Ovary (tissue), 10 donors: ENCODE measurements at regions of chr6 and their contacts with region 1.

Region 1: DNA sequence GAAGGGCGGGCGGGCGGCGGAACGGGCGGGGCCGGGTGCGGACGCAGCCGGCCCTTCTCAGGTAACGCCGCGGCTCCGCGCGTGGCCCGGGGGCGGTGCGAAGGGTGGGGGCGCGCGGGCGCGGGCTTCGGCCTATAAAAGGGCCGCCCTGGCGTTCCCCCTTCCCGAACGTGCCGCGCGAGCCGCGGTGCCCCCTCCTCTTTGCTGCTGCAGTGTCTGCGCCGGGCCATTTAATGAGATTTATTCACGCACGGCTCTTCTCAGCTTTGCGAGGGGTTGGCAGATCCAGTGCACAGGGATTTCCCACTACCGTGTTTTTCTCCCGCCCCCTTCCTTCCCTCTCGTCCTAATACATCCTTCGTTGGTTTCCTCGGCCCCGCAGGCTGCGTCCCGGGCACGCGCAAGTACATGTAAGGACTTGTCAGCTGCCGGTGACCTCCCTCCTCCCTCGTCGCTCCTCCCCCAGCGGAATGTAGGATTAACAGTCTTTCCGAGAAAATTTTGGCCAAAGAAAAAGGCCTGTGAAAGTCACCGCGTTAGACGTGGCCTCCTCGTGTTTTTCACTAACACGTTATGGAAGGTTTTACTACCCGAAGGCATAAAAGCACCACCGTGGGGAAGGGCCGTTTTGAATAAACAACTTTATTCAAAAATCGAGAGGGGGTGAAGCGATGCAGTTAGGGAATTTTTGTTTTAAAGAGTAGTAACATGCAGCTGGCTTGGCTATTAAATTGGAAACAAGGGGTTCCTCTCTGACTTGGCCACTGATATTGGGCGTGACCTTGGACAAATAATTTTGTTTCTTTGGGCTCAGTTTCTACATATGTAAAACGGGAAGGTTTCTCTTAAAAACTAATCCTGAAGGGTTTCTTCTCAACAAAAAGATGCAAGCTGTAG is 966 bp upstream of the REV3L start:
- DNase-seq: peak; percentile 87 to 94 (median 94)
- H3K4me3 ChIP-seq: peak overlapping the region; percentile 97
- H3K27ac ChIP-seq: peak overlapping the region; percentile 96 to 99
- H3K4me1 ChIP-seq: peaks cover 4% of the 10 kb centered on the region
- H3K27me3 ChIP-seq: no peaks in the 10 kb centered on the region
- CTCF ChIP-seq: peak in 1 of 3 donors; percentile 11
- EP300 ChIP-seq: peak; percentile 15
- POLR2A ChIP-seq: peak; percentile 78

Region 2: GRCh38 chr6:109867970-109868358 is 1616.0 kb before region 1 on chr6:
- intact Hi-C with region 1: no loop called
- DNase-seq: peak in 3 of 5 donors; percentile 38 to 46 (median 41)
- H3K4me3 ChIP-seq: no peak overlapping the region
- H3K27ac ChIP-seq: peak overlapping the region in 1 of 2 donors; percentile 81
- H3K4me1 ChIP-seq: peaks cover 17% of the 10 kb centered on the region
- H3K27me3 ChIP-seq: no peaks in the 10 kb centered on the region
- CTCF ChIP-seq: no peak
- EP300 ChIP-seq: no peak
- POLR2A ChIP-seq: no peak

Region 3: DNA sequence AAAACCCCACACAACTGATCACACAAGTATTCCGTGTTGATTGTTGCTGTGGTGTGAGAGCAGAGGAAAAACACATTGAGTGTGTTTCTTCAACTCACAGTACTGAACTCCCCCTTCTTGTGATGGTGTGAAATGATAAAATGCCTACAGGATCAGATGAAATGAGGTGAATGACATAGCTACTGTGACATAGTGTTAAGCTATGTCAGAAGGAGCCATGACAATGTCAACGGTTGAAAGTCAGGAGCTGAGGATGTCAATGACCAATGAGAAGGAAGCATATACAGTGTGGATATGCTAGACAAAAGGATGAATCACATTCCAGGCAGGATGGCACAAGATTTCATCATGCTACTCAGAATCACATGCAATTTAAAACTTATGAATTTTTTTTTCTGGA is 1343.3 kb before region 1 on chr6:
- intact Hi-C with region 1: no loop called
- DNase-seq: no peak
- H3K4me3 ChIP-seq: no peak overlapping the region
- H3K27ac ChIP-seq: no peak overlapping the region
- H3K4me1 ChIP-seq: no peaks in the 10 kb centered on the region
- H3K27me3 ChIP-seq: no peaks in the 10 kb centered on the region
- CTCF ChIP-seq: no peak
- EP300 ChIP-seq: no peak
- POLR2A ChIP-seq: no peak

Region 4: GRCh38 chr6:111541026-111541681 is 57.2 kb after region 1 on chr6:
- intact Hi-C with region 1: loop called in 1 of 4 experiments (anchors 10 kb)
- DNase-seq: no peak
- H3K4me3 ChIP-seq: no peak overlapping the region
- H3K27ac ChIP-seq: no peak overlapping the region
- H3K4me1 ChIP-seq: peaks cover 3% of the 10 kb centered on the region
- H3K27me3 ChIP-seq: no peaks in the 10 kb centered on the region
- CTCF ChIP-seq: no peak
- EP300 ChIP-seq: no peak
- POLR2A ChIP-seq: no peak

Region 5: GRCh38 chr6:111552241-111552744 is 68.3 kb after region 1 on chr6:
- intact Hi-C with region 1: loop called in 2 of 4 experiments (anchors 10 kb)
- DNase-seq: peak; percentile 70 to 80 (median 77)
- H3K4me3 ChIP-seq: no peak overlapping the region
- H3K27ac ChIP-seq: peak overlapping the region; percentile 35 to 58
- H3K4me1 ChIP-seq: peaks cover 14% of the 10 kb centered on the region
- H3K27me3 ChIP-seq: no peaks in the 10 kb centered on the region
- CTCF ChIP-seq: no peak
- EP300 ChIP-seq: no peak
- POLR2A ChIP-seq: no peak

Region 6: DNA sequence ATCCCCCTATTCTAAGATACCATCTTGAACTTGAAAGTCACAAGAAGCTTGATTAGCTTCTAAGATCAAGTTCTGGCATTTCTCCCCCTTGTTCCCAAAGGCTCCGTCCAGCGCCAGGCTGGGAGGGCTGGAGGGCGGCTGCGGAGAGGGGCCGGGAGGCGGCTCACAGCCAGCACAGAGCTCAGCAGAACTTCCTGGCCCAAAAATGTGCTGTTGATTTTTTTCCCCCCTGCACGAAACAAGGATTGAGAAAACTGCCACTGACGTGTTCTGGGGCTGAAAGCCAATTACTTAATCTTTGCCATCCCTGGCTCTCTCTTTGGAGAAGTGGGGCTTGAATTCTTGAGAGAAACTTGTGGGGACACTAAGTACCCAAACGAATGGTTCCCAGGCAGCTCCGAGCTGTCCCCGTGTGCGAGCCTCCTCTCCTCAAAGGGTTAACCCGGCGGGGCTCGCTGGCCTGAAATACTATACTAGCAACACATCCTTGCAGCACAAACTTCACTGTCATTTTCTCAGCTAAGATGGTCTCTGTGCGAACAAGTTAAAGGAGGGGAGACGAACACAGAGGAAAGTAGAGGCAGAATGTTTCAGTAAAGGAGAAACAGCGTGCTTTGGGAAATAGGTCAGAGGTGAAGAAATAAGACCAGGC is 121.2 kb after region 1 on chr6:
- intact Hi-C with region 1: loop called (anchors 1 to 10 kb)
- DNase-seq: peak; percentile 76 to 85 (median 81)
- H3K4me3 ChIP-seq: peak overlapping the region; percentile 45
- H3K27ac ChIP-seq: peak overlapping the region; percentile 89 to 97
- H3K4me1 ChIP-seq: peaks cover 18% of the 10 kb centered on the region
- H3K27me3 ChIP-seq: no peaks in the 10 kb centered on the region
- CTCF ChIP-seq: no peak
- EP300 ChIP-seq: no peak
- POLR2A ChIP-seq: peak; percentile 65